ENCODE measurements at regions of chr9 and their contacts with region 1.

Region 1: GRCh38 chr9:128881901-128882681 is at the starts of genes KYAT1 and LRRC8A:
- DNase-seq: peak; percentile 99
- H3K4me3 Mint-ChIP-seq: peak within 1 kb of the TSS; percentile 95
- H3K27ac Mint-ChIP-seq: peak within 1 kb of the TSS; percentile 89
- H3K4me1 Mint-ChIP-seq: peaks cover 50% of the 10 kb centered on the region
- H3K27me3 Mint-ChIP-seq: no peaks in the 10 kb centered on the region
- total RNA-seq, gene KYAT1: 15.9 to 18.1 TPM
- total RNA-seq, gene LRRC8A: 18.0 to 18.7 TPM

Region 2: GRCh38 chr9:128322404-128323211 is 559.5 kb before region 1 on chr9 and contains the starts of genes COQ4 and TRUB2:
- CTCF ChIA-PET with region 1: no interaction called
- POLR2A ChIA-PET with region 1: no interaction called
- intact Hi-C with region 1: loop called (anchors 5 kb)
- DNase-seq: peak; percentile 95
- H3K4me3 Mint-ChIP-seq: peak within 1 kb of the TSS; percentile 85
- H3K27ac Mint-ChIP-seq: peak within 1 kb of the TSS; percentile 94
- H3K4me1 Mint-ChIP-seq: peaks cover 17% of the 10 kb centered on the region
- H3K27me3 Mint-ChIP-seq: no peaks in the 10 kb centered on the region
- total RNA-seq, gene COQ4: 33.0 to 35.5 TPM
- total RNA-seq, gene TRUB2: 27.2 to 27.4 TPM

Region 3: DNA sequence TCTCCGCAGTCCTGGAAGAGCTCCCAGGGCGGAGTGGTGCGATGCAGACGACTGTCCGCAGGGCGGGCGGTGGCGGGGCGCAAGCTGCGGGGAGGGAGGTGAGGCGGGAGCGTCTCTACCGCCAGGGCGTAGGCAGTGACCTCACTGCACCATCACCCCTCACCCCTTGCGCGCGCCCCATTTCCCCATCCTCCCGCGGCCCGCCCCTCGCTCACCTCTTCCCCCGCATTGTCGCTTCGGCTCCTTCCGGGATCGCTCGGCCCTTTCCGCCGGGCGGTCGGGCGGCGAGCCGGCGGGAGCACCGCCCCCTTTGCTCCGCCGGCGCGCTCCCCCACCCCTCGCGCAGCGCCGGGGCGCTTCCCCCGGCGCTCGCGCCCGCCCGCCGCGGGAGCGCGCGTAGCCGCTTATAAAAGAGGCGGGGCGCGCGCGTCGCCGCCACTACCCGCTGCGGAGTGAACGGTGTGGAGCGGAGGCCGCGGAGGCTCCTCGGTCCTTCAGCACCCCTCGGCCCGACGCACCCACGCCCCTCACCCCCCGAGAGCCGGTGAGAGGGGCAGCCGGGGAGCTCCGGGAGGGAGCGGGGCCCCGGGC is 329.8 kb before region 1 on chr9 and contains the start of gene SPTAN1:
- CTCF ChIA-PET with region 1: interaction called, 3 read pairs
- POLR2A ChIA-PET with region 1: interaction called, 4 read pairs
- intact Hi-C with region 1: loop called (anchors 5 kb)
- DNase-seq: peak; percentile 97
- H3K4me3 Mint-ChIP-seq: peak within 1 kb of the TSS; percentile 96
- H3K27ac Mint-ChIP-seq: peak within 1 kb of the TSS; percentile 95
- H3K4me1 Mint-ChIP-seq: peaks cover 32% of the 10 kb centered on the region
- H3K27me3 Mint-ChIP-seq: no peaks in the 10 kb centered on the region
- total RNA-seq, gene SPTAN1: 228 TPM

Region 4: GRCh38 chr9:128863647-128864046 is 18.4 kb before region 1 on chr9:
- CTCF ChIA-PET with region 1: interaction called, 34 read pairs
- POLR2A ChIA-PET with region 1: interaction called, 3 read pairs
- intact Hi-C with region 1: no loop called
- DNase-seq: peak; percentile 91
- H3K4me3 Mint-ChIP-seq: no peak overlapping the region
- H3K27ac Mint-ChIP-seq: no peak overlapping the region
- H3K4me1 Mint-ChIP-seq: peaks cover 6% of the 10 kb centered on the region
- H3K27me3 Mint-ChIP-seq: no peaks in the 10 kb centered on the region

Region 5: GRCh38 chr9:128927731-128928411 is 45.8 kb after region 1 on chr9:
- CTCF ChIA-PET with region 1: interaction called, 12 read pairs
- POLR2A ChIA-PET with region 1: interaction called, 4 read pairs
- intact Hi-C with region 1: loop called (anchors 5 kb)
- DNase-seq: peak; percentile 65
- H3K4me3 Mint-ChIP-seq: no peak overlapping the region
- H3K27ac Mint-ChIP-seq: no peak overlapping the region
- H3K4me1 Mint-ChIP-seq: peaks cover 9% of the 10 kb centered on the region
- H3K27me3 Mint-ChIP-seq: no peaks in the 10 kb centered on the region

Region 6: GRCh38 chr9:129028192-129028957 is 146.3 kb after region 1 on chr9 and contains the start of gene SH3GLB2:
- CTCF ChIA-PET with region 1: no interaction called
- POLR2A ChIA-PET with region 1: no interaction called
- intact Hi-C with region 1: loop called (anchors 2 kb)
- DNase-seq: peak; percentile 97
- H3K4me3 Mint-ChIP-seq: peak within 1 kb of the TSS; percentile 84
- H3K27ac Mint-ChIP-seq: peak within 1 kb of the TSS; percentile 55
- H3K4me1 Mint-ChIP-seq: peaks cover 22% of the 10 kb centered on the region
- H3K27me3 Mint-ChIP-seq: no peaks in the 10 kb centered on the region
- total RNA-seq, gene SH3GLB2: 59.5 to 62.3 TPM

Region 7: DNA sequence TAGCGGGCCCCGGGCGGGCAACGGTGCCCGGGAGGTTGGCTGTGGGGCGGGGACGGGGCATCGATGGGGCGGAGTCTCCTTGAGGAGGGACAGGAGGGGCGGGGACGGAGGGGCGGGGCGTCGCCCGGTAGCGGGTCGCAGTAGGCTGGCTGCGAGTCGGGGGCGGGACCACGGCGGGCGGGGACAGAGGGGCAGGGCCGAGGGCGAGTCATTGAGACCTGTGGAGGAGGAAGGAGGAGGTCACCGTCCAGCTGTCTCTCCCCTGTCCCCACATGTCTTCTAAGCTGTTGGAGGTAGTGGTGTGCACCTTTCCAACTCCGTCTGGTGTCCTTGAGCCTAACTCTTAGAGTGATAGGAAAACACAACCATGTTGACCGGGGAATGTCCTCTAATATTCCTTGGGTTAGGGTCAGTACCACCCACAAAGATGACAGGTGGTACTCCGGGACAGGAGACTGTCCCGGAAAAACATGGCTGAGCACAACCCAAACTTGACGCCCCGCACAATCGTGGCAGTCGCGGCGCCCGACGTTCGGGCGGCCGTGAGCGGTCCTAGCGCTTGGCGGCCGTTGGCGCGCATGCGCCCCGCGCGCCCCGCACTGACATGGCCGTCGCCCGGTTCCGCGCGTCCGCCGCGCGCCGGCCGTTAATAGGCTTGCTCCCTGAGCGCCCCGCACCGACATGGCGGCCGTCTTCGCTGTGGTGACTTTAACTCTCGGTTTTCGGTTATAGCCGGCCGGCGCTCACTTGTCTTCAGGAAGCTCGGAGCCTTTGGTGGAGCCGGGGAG is 228.8 kb after region 1 on chr9 and contains the starts of genes CRAT and PTPA:
- CTCF ChIA-PET with region 1: no interaction called
- POLR2A ChIA-PET with region 1: no interaction called
- intact Hi-C with region 1: loop called (anchors 2 kb)
- DNase-seq: peak; percentile 98
- H3K4me3 Mint-ChIP-seq: peak within 1 kb of the TSS; percentile 94
- H3K27ac Mint-ChIP-seq: peak within 1 kb of the TSS; percentile 97
- H3K4me1 Mint-ChIP-seq: peaks cover 34% of the 10 kb centered on the region
- H3K27me3 Mint-ChIP-seq: no peaks in the 10 kb centered on the region
- total RNA-seq, gene CRAT: 16.0 to 16.4 TPM
- total RNA-seq, gene PTPA: 74.6 to 76.3 TPM